ENCODE measurements at regions of chr4 and their contacts with region 1.

Region 1: DNA sequence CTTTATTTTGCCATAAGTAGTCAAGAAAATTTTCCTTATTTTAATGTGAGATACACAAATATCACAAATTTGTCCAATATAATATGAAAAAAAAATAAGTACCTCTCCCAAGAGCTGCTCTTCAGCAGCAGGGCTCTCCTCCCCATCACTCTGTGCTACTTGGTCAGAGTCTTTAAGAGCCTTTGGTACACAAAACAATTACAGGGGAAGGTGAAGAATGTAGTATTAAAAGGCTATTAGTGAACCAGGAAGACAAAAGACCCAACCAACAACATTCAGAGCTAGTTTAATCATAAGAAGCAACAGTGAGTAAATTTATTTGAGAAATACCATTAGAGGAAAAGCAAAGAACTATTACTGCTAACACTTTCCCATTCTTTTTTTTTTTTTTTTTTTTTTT is 29.4 kb downstream of the SEC31A start:
- DNase-seq: no peak
- ATAC-seq: no peak
- H3K4me3 ChIP-seq: no peak overlapping the region
- H3K27ac ChIP-seq: no peak overlapping the region
- H3K4me1 ChIP-seq: peaks cover 8% of the 10 kb centered on the region
- H3K27me3 ChIP-seq: no peaks in the 10 kb centered on the region
- CTCF ChIP-seq: no peak
- EP300 ChIP-seq: no peak
- POLR2A ChIP-seq: no peak
- RAD21 ChIP-seq: no peak

Region 2: GRCh38 chr4:82890901-82891706 is 29.6 kb after region 1 on chr4 and contains the start of gene SEC31A:
- CTCF ChIA-PET with region 1: no interaction called
- POLR2A ChIA-PET with region 1: no interaction called
- RAD21 ChIA-PET with region 1: no interaction called
- SMC1A ChIA-PET with region 1: interaction called, 10 read pairs
- in situ Hi-C with region 1: no loop called
- intact Hi-C with region 1: no loop called
- DNase-seq: peak; percentile 84
- ATAC-seq: peak; percentile 90
- H3K4me3 ChIP-seq: peak within 1 kb of the TSS; percentile 90
- H3K27ac ChIP-seq: peak within 1 kb of the TSS; percentile 94
- H3K4me1 ChIP-seq: peaks cover 3% of the 10 kb centered on the region; the same call in 1 of the 2 replicates
- H3K27me3 ChIP-seq: no peaks in the 10 kb centered on the region
- CTCF ChIP-seq: 0 out of 6 replicates have a peak, but pooled peaks of 1 of the 3 experiments have one; percentile 15
- EP300 ChIP-seq: peak in 1 of 2 experiments; percentile 31; a peak in 1 of 4 replicates
- POLR2A ChIP-seq: peak; percentile 99
- RAD21 ChIP-seq: no peak
- polyA plus RNA-seq, gene SEC31A: 74.6 to 80.8 TPM

Measured in GM12878 (cell line).